AG04450 (cell line): ENCODE measurements at regions of chr17 and their contacts with region 1.

Region 1: GRCh38 chr17:58249270-58250133 is 11.1 kb downstream of the LPO start:
- DNase-seq: peak; percentile 1
- H3K4me3 ChIP-seq: peak overlapping the region; percentile 60
- H3K27ac ChIP-seq: no peak overlapping the region
- H3K27me3 ChIP-seq: peaks cover 46% of the 10 kb centered on the region
- CTCF ChIP-seq: peak; percentile 81

Region 2: DNA sequence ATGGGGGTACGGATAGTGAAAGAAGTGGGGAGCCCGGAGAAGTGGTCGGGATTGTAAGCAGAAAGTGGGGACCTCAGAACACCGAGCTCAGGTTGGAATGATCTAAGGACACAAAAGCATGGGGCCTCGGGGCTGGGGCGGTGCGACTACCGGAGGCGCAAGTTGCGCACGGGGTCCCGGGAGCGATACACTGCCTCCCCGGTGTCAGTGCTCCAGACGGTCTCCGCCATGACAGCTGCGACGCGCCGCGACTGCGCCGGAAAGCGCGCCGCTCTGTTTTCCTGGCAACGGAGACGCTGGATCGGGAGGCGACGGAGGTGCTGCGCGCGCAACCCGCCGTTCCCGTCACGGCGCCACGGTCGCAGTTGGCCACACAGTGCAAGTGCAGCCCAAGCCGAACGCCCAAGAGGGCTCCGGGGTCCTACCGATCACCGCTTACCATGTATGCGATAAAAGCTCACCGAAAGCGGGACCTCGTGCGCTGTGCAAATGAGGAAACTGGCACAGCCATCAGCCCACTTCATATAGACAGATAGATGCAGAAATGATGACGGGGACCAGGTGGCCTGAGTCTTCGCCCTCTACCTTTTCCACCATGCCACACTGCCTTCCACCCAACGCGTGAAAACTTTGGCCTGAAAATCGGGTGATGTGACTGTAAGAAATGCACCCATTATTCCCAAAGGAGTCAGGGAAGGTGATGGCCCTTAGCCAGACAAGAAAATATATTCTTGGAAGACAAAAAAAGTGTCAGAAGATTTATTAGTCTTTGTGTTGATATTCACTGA is 30.3 kb before region 1 on chr17 and contains the start of gene MKS1:
- CTCF ChIA-PET with region 1: interaction called, 25 read pairs
- POLR2A ChIA-PET with region 1: no interaction called
- DNase-seq: peak; percentile 71
- H3K4me3 ChIP-seq: peak within 1 kb of the TSS; percentile 97
- H3K27ac ChIP-seq: no peak within 1 kb of the TSS
- H3K27me3 ChIP-seq: no peaks in the 10 kb centered on the region
- CTCF ChIP-seq: peak; percentile 57
- polyA plus RNA-seq, gene MKS1: 13.5 and 14.4 TPM in 2 replicates

Region 3: GRCh38 chr17:58224315-58224714 is 25.2 kb before region 1 on chr17:
- CTCF ChIA-PET with region 1: interaction called, 25 read pairs
- POLR2A ChIA-PET with region 1: no interaction called
- DNase-seq: no peak
- H3K4me3 ChIP-seq: no peak overlapping the region
- H3K27ac ChIP-seq: no peak overlapping the region
- H3K27me3 ChIP-seq: peaks cover 12% of the 10 kb centered on the region
- CTCF ChIP-seq: no peak

Region 4: DNA sequence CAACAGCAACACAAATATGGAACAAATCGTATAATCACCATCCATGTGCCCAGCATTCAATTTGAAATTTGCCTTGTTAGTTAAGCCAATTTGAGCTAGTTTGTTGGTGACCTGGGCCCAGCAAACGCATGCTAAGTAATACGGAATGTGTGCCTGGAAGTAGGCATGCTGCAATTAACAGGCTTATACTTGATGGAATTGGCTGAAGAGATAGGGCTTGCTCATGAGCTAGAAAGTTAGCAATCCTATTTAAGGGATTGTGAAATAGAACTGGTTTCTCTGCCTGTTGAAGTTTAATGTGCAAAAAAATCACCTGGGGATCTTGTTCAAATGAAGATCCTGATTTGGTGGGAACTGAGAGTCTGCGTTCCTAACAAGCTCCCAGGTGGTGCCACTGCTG is 19.6 kb before region 1 on chr17:
- CTCF ChIA-PET with region 1: interaction called, 25 read pairs
- POLR2A ChIA-PET with region 1: no interaction called
- DNase-seq: no peak
- H3K4me3 ChIP-seq: no peak overlapping the region
- H3K27ac ChIP-seq: no peak overlapping the region
- H3K27me3 ChIP-seq: peaks cover 12% of the 10 kb centered on the region
- CTCF ChIP-seq: no peak

Region 5: GRCh38 chr17:58238139-58238634 is 11.3 kb before region 1 on chr17 and contains the start of gene LPO:
- CTCF ChIA-PET with region 1: interaction called, 28 read pairs
- POLR2A ChIA-PET with region 1: no interaction called
- DNase-seq: no peak
- H3K4me3 ChIP-seq: no peak within 1 kb of the TSS
- H3K27ac ChIP-seq: no peak within 1 kb of the TSS
- H3K27me3 ChIP-seq: peaks cover 40% of the 10 kb centered on the region
- CTCF ChIP-seq: no peak
- polyA plus RNA-seq, gene LPO: not detected in 2 replicates